ENCODE measurements at regions of chr1 and their contacts with region 1.

Region 1: DNA sequence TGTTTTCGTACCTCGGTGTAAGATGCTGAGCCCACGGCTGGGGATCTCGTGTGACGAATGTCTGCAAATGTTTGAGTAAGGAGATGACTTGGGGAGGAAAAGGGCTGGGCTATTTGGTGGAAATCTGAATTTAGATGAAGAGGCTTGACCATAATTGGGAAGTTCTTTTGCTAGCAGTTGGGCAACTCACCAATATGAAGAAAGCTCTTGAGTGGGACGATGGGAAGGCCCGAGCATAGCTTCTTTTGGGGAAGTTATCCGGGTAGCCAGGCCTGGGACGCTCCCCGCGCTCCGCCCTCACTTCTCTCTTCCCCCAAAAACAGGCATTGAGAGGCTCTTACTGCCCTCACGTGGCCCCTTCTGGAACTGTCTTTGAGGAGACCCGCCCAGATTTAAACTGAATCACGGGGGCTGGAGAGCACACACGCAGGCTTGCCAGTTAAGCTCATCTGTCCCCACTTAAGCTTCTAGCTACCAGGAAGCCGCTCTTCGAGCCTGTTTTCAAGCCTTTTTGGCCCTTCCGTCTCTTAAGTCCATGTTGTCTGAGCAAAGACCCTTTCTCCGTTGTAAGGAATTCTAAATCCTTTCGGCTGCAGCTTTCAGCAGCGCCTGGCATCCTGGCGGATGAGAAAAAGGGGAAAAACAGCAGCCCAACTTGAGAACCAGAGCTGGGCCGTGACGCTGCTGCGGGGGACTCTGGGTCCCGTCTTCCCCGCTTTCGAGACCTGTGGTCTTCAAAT is 93.1 kb downstream of the NID1 start:
- DNase-seq: peak; percentile 84
- ATAC-seq: peak; percentile 97
- H3K4me3 ChIP-seq: peak overlapping the region; percentile 58
- H3K27ac ChIP-seq: peak overlapping the region; percentile 80
- H3K4me1 ChIP-seq: peaks cover 7% of the 10 kb centered on the region
- H3K27me3 ChIP-seq: no peaks in the 10 kb centered on the region
- CTCF ChIP-seq: peak; percentile 87 to 95 (median 89); a peak in 5 of 6 replicates
- EP300 ChIP-seq: no peak
- POLR2A ChIP-seq: peak; percentile 75
- RAD21 ChIP-seq: peak; percentile 98

Region 2: DNA sequence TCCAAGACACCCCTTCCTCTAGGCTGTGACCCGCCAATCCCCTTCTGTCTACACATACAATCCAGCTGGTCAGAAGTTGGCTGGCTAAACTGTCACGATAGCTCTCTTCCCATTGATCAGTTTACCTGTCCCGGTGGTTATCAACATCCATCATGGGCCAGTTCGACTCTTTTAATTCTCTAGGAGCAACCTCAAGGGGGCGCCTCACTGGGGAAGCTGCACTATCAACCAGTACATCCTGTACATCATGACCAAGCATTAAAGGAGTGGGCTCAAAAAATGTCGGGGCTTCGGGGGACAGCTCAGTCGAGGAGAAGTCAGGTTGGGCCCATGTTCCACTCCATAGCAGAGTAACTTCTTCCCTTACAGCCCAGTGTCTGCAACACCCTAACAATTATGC is 414.2 kb before region 1 on chr1:
- CTCF ChIA-PET with region 1: interaction called, 10 read pairs
- POLR2A ChIA-PET with region 1: no interaction called
- RAD21 ChIA-PET with region 1: no interaction called
- SMC1A ChIA-PET with region 1: interaction called, 7 read pairs
- in situ Hi-C with region 1: no loop called
- intact Hi-C with region 1: no loop called
- DNase-seq: no peak
- ATAC-seq: no peak
- H3K4me3 ChIP-seq: no peak overlapping the region
- H3K27ac ChIP-seq: no peak overlapping the region
- H3K4me1 ChIP-seq: no peaks in the 10 kb centered on the region
- H3K27me3 ChIP-seq: no peaks in the 10 kb centered on the region
- CTCF ChIP-seq: peak in 2 of 3 experiments; percentile 26 to 29; a peak in 3 of 6 replicates
- EP300 ChIP-seq: no peak
- POLR2A ChIP-seq: no peak
- RAD21 ChIP-seq: no peak

Region 3: GRCh38 chr1:235806123-235806522 is 165.6 kb before region 1 on chr1:
- CTCF ChIA-PET with region 1: interaction called, 10 read pairs
- POLR2A ChIA-PET with region 1: no interaction called
- RAD21 ChIA-PET with region 1: no interaction called
- SMC1A ChIA-PET with region 1: interaction called, 10 read pairs
- in situ Hi-C with region 1: no loop called
- intact Hi-C with region 1: no loop called
- DNase-seq: no peak
- ATAC-seq: no peak
- H3K4me3 ChIP-seq: no peak overlapping the region
- H3K27ac ChIP-seq: no peak overlapping the region
- H3K4me1 ChIP-seq: no peaks in the 10 kb centered on the region
- H3K27me3 ChIP-seq: no peaks in the 10 kb centered on the region
- CTCF ChIP-seq: no peak
- EP300 ChIP-seq: no peak
- POLR2A ChIP-seq: no peak
- RAD21 ChIP-seq: no peak

Region 4: DNA sequence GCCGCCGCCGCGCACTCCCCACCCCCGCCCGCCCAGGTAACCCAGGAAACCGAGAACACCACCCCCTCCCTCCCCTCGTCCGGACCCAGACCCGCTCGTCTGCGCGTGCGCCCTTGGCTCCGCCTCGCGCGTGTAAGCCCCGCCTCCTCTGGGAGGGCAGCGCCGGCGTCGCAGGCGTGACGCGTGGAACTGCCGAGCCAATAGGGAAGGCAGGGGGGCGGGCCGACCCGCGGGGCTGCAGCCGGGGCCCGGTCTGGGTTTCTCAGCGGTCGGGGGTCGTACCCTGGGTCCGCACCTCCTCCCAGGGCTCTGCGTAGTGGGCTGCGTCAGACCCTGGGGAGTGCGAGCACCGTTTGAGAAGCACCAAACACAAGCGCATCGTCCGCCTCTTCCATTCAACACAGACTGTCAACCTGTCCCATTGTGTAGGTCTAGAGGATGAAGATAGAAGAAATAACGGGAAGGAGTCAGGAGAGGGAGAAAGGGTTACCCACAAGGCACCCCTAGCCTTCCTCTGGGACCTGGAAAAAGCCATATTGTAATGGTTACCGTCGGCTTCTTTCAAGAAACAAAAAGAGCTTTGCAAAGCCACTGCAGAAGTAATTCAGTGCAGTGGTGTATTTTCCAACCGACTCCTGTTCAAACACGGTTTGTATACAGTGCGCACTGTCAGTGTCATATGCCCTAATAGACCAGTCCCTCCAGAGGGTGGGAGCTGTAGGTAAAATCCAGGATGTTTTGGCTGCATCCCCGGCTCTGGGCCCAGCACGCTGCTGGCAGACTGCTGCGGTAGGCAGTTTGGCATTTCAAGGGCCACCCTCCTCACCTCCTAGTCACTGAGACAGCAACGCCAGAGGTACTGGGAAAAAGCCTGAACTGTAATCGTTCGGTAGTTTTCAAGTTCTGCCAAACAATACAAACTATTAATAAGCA is 104.6 kb before region 1 on chr1:
- CTCF ChIA-PET with region 1: interaction called, 40 read pairs
- POLR2A ChIA-PET with region 1: interaction called, 3 read pairs
- RAD21 ChIA-PET with region 1: interaction called, 65 read pairs
- SMC1A ChIA-PET with region 1: interaction called, 55 read pairs
- in situ Hi-C with region 1: no loop called
- intact Hi-C with region 1: loop called (anchors 1 kb)
- DNase-seq: peak; percentile 87
- ATAC-seq: peak; percentile 78
- H3K4me3 ChIP-seq: peak overlapping the region; percentile 91
- H3K27ac ChIP-seq: peak overlapping the region; percentile 88
- H3K4me1 ChIP-seq: peaks cover 5% of the 10 kb centered on the region; the same call in 1 of the 2 replicates
- H3K27me3 ChIP-seq: no peaks in the 10 kb centered on the region
- CTCF ChIP-seq: no peak
- EP300 ChIP-seq: no peak
- POLR2A ChIP-seq: peak; percentile 88
- RAD21 ChIP-seq: no peak

Region 5: GRCh38 chr1:235917267-235917811 is 54.4 kb before region 1 on chr1:
- CTCF ChIA-PET with region 1: interaction called, 19 read pairs
- POLR2A ChIA-PET with region 1: no interaction called
- RAD21 ChIA-PET with region 1: interaction called, 10 read pairs
- SMC1A ChIA-PET with region 1: interaction called, 3 read pairs
- in situ Hi-C with region 1: no loop called
- intact Hi-C with region 1: no loop called
- DNase-seq: peak; percentile 67
- ATAC-seq: peak; percentile 95
- H3K4me3 ChIP-seq: no peak overlapping the region
- H3K27ac ChIP-seq: no peak overlapping the region
- H3K4me1 ChIP-seq: peaks cover 3% of the 10 kb centered on the region
- H3K27me3 ChIP-seq: no peaks in the 10 kb centered on the region
- CTCF ChIP-seq: no peak
- EP300 ChIP-seq: no peak
- POLR2A ChIP-seq: no peak
- RAD21 ChIP-seq: no peak

Region 6: GRCh38 chr1:235960809-235961208 is 10.9 kb before region 1 on chr1:
- CTCF ChIA-PET with region 1: interaction called, 106 read pairs
- POLR2A ChIA-PET with region 1: interaction called, 5 read pairs
- RAD21 ChIA-PET with region 1: interaction called, 41 read pairs
- SMC1A ChIA-PET with region 1: interaction called, 131 read pairs
- in situ Hi-C with region 1: no loop called
- intact Hi-C with region 1: no loop called
- DNase-seq: no peak
- ATAC-seq: peak; percentile 32; the same call in 2 of the 3 replicates
- H3K4me3 ChIP-seq: no peak overlapping the region
- H3K27ac ChIP-seq: no peak overlapping the region
- H3K4me1 ChIP-seq: no peaks in the 10 kb centered on the region
- H3K27me3 ChIP-seq: no peaks in the 10 kb centered on the region
- CTCF ChIP-seq: no peak
- EP300 ChIP-seq: no peak
- POLR2A ChIP-seq: no peak
- RAD21 ChIP-seq: no peak

Region 7: DNA sequence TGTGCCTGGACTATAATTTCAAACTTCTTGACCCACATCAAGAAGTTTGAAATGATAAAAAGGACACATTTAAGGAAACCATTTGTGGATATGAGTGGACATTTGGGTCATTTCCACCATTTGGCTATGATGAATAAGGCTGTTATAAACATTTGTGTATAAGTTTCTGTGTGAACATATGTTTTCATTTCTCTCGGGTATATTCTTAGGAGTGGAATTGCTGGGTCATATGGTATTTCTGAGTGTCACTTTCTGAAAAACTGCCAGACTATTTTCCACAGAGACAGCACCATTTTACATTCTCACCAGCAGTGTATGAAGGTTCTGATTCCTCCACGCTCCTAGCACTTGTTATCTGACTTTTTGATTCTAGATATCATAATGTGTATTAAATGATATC is 221.4 kb after region 1 on chr1:
- CTCF ChIA-PET with region 1: no interaction called
- POLR2A ChIA-PET with region 1: no interaction called
- RAD21 ChIA-PET with region 1: no interaction called
- SMC1A ChIA-PET with region 1: no interaction called
- in situ Hi-C with region 1: no loop called
- intact Hi-C with region 1: no loop called
- DNase-seq: no peak
- ATAC-seq: no peak
- H3K4me3 ChIP-seq: no peak overlapping the region
- H3K27ac ChIP-seq: no peak overlapping the region
- H3K4me1 ChIP-seq: no peaks in the 10 kb centered on the region
- H3K27me3 ChIP-seq: no peaks in the 10 kb centered on the region
- CTCF ChIP-seq: no peak
- EP300 ChIP-seq: no peak
- POLR2A ChIP-seq: no peak
- RAD21 ChIP-seq: no peak